PC-3 (cell line): ENCODE measurements at regions of chr5 and their contacts with region 1.

Region 1: DNA sequence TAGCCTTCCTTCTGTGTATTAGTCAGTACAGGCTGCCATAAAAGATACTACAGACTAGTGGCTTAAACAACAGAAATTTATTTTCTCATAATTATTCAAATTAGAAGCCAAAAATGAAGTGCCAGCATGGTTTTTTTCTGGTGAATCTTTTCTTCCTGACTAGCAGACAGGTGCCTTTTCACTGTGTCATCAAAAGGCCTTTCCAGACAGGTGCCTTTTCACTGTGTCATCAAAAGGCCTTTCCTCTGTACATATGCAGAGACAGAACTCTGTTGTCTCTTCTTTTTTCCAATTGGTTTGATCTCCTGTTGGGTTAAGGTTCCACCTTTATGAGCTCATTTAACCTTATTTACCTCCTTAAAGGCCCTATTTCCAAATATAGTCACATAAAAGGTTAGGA is 599.9 kb downstream of the ISL1 start:
- DNase-seq: no peak
- ATAC-seq: no peak
- H3K4me3 ChIP-seq: no peak overlapping the region
- H3K27ac ChIP-seq: no peak overlapping the region
- H3K4me1 ChIP-seq: no peaks in the 10 kb centered on the region
- H3K27me3 ChIP-seq: no peaks in the 10 kb centered on the region
- CTCF ChIP-seq: no peak

Region 2: GRCh38 chr5:51622161-51622790 is 360.9 kb before region 1 on chr5:
- CTCF ChIA-PET with region 1: no interaction called
- POLR2A ChIA-PET with region 1: interaction called, 12 read pairs
- intact Hi-C with region 1: no loop called
- DNase-seq: no peak
- ATAC-seq: no peak
- H3K4me3 ChIP-seq: no peak overlapping the region
- H3K27ac ChIP-seq: no peak overlapping the region
- H3K4me1 ChIP-seq: no peaks in the 10 kb centered on the region
- H3K27me3 ChIP-seq: no peaks in the 10 kb centered on the region
- CTCF ChIP-seq: no peak